ENCODE measurements at regions of chr10 and their contacts with region 1.

Region 1: DNA sequence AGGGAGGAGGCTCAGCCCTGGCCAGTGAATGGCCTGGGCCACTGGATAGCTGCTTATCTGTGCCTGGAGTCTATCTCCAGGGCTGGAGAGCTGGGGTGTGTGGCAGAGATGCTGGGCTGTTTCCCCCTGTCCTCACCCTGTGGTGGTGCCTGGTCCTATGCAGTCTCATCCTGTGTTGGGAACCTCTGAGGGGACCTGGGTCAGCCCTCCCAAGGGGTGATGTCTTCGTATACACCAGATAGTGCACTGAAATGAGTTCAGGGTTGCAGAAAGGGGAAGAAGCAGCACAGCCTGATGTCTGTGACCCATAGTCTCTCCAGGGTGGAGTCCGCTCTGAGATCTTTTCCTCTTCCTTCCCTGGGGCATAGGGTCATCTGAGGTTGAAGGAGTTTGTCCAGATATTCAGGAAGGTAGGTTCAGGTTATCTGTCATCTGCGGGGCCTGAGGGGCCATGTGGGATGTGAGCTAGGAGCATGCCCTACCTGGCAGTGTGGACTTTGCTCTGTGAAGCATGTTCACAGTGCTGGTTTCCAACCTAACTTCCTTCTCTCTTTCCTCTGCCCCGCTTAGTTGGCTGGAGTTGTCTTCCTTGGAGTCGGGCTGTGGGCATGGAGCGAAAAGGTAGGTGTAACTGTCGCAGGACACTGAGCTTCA is 33.4 kb upstream of the SH2D4B start:
- DNase-seq: peak in 2 of 3 donors; percentile 33 to 53
- H3K4me3 ChIP-seq: no peak overlapping the region
- H3K27ac ChIP-seq: no peak overlapping the region
- H3K4me1 ChIP-seq: peaks cover 10 to 65% (median 39%) of the 10 kb centered on the region in 4 experiments
- H3K27me3 ChIP-seq: no peaks in the 10 kb centered on the region

Region 2: DNA sequence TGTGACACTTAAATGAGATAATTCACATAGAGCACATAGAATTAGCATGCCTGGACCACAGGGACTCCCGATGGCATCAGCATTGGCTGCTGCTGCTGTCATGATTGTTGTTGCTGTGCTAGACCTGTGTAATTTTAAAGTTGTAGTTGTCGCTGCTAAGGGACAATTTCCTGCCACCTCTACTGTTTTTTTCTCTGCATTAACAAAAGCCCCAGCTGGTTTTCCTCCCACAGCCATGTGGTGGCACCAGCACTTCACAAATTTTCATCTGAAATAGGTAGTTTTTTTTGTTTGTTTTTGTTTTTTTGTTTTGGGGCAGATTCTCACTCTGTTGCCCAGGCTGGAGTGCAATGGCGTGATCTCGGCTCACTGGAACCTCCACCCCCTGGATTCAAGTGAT is 121.3 kb before region 1 on chr10:
- CTCF ChIA-PET with region 1: interaction called, 33 read pairs
- POLR2A ChIA-PET with region 1: no interaction called
- DNase-seq: peak; percentile 70 to 86 (median 85)
- H3K4me3 ChIP-seq: peak overlapping the region in 3 of 7 experiments; percentile 19 to 33 (median 20)
- H3K27ac ChIP-seq: no peak overlapping the region
- H3K4me1 ChIP-seq: peaks cover 0 to 12% (median 6%) of the 10 kb centered on the region in 4 experiments
- H3K27me3 ChIP-seq: no peaks in the 10 kb centered on the region

Region 3: DNA sequence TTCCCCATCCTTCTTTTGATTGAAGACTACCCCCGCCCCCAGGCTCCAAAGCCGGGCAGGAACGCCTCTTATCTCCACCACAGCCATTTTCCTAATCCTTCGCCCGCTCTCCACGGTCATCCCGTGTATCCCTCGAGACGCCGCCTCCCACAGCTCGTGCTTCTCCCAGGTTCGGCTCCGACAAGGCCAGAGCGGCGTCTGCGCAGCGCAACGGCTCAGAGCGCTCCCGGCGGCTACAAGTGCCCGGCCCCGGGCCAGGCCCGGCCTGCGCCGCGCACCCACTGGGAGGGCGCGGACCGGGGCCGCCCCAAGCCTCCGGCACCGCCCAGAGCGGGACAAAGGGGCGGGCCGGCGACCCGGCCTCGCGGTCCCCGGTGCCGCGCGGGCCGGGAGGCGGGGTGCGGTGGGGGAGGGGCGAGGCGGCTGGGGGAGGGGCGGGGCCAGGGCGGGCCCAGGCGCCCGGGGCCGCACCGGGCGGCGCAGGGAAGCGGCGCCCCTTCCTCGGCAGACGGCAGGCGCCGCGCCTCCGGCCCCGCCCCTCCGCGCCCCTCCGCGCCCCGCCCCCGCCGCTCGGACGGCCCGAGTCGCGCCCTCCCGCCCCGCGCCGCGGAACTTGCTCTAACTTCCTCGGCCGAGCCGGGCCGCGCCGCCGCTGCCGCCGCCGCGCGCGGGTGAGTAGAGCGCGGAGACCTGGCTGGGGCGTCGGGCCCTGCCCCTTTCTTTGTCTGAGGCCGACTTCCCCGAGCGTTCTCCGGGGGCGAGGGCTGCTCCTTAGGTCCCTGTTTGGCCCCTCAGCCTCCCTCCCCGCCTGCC is 50.4 kb before region 1 on chr10 and contains the start of gene TSPAN14:
- CTCF ChIA-PET with region 1: interaction called, 571 read pairs
- POLR2A ChIA-PET with region 1: interaction called, 3 read pairs
- DNase-seq: peak; percentile 64 to 84 (median 75)
- H3K4me3 ChIP-seq: peak within 1 kb of the TSS; percentile 62 to 87 (median 78)
- H3K27ac ChIP-seq: peak within 1 kb of the TSS in 1 of 2 experiments; percentile 78
- H3K4me1 ChIP-seq: peaks cover 10 to 39% (median 38%) of the 10 kb centered on the region in 4 experiments
- H3K27me3 ChIP-seq: no peaks in the 10 kb centered on the region

Region 4: DNA sequence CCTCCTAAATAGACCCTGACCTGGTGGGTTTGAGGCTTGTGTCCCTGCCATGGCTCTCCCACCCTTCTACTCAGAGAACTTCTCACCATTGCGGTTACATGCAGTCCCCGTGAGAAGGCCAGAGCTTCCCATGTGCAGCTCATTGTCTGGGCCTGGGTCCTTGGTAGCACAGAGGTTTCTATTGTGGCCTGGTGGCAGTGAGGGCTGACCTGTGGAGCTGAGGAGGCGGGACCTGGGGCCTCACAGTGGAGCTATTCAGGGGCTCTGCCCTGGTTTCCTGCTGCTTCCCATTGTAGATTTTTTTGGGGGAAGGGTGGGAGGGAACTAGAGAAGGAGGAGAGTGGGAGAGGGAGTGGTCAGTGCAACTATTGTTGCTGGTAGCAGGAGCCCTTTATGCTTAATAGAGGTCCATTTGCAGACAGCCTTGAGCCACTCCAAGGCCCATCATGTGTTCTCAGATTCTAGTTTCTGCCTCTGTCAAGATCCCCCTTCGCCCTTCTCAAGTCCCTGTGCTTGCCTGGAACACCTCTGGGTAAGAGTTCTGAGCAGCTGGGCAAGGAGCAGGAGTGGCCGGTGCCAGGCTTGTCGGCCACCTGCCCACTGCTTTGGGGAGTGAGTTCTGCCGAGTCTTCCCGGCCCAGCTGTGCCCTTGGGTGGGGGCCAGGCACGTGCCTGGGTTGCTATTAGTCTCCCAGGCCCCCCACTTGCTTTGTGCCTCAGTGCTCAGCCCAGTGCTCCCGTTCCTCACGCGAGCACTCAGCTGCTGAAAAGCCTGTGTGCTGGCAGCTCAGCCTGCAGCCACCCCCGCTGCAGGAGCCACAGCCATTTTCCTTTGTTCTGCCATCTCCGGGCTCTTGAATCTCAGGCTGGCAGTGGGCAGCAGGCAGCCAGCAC is 39.5 kb before region 1 on chr10:
- CTCF ChIA-PET with region 1: interaction called, 43 read pairs
- POLR2A ChIA-PET with region 1: no interaction called
- DNase-seq: no peak
- H3K4me3 ChIP-seq: no peak overlapping the region
- H3K27ac ChIP-seq: peak overlapping the region in 1 of 2 experiments; percentile 50
- H3K4me1 ChIP-seq: peaks cover 28 to 91% (median 83%) of the 10 kb centered on the region in 4 experiments
- H3K27me3 ChIP-seq: no peaks in the 10 kb centered on the region

Region 5: GRCh38 chr10:80493522-80494051 is 10.7 kb before region 1 on chr10:
- CTCF ChIA-PET with region 1: interaction called, 59 read pairs
- POLR2A ChIA-PET with region 1: no interaction called
- DNase-seq: peak; percentile 28 to 75 (median 62)
- H3K4me3 ChIP-seq: peak overlapping the region in 2 of 7 experiments; percentile 10 to 21
- H3K27ac ChIP-seq: peak overlapping the region in 1 of 2 experiments; percentile 55
- H3K4me1 ChIP-seq: peaks cover 25 to 68% (median 48%) of the 10 kb centered on the region in 4 experiments
- H3K27me3 ChIP-seq: no peaks in the 10 kb centered on the region

Measured in common myeloid progenitor, CD34-positive (primary cell).